ENCODE measurements at regions of chr15 and their contacts with region 1.

Region 1: GRCh38 chr15:64905119-64905831 is 6.4 kb upstream of the ANKDD1A start:
- DNase-seq: peak; percentile 81
- ATAC-seq: peak; percentile 92 to 94

Region 2: DNA sequence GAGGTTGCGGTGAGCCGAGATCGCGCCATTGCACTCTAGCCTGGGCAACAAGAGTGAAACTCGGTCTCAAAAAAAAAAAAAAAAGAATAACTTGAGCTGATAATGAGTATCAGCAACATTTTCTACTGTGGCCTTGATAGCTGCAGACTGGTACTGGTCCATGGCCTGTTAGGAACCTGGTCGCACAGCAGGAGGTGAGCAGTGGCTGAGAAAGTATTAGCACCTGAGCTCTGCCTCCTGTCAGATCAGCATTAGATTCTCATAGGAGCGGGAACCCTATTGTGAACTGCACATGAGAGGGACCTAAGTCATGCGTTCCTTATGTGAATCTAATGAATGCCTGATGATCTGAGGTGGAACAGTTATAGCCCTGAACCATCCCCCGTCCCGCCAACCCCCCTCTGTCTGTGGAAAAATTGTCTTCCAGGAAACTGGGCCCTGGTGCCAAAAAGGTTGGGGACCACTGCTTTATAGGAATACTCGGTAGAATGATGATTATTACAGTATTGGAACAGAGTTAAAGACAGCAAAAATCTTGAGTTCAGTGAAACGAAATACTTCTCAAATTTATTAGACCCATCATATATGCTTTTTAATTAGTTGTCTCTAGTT is 318.9 kb before region 1 on chr15:
- intact Hi-C with region 1: no loop called
- DNase-seq: no peak
- ATAC-seq: no peak

Region 3: DNA sequence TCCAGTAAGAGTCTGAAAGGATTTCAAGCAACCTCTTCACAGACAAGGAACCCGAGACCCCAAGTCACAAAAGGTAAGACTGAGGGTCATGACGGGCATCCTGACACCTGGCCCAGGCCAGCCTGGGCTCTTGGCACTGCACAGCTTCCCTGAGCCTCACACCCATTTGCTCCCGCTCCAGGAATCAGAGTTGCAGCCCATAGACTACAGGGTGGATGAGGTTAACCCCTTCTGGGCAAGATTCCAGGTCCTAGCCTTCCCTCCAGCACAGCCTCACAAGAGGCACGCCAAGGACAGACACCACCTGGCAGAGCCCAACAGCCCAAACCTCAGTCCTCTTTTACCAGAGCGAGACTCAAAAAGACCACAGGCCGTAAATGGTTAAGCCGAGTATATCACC is 166.1 kb before region 1 on chr15:
- intact Hi-C with region 1: loop called in 1 of 2 experiments (anchors 5 kb)
- DNase-seq: no peak
- ATAC-seq: peak in 1 of 2 donors; percentile 16